Caco-2 (cell line): ENCODE measurements at regions of chr7 and their contacts with region 1.

Region 1: GRCh38 chr7:124152859-124153692 is 120.2 kb upstream of the TMEM229A start:
- DNase-seq: peak in 1 of 2 experiments; percentile 49
- H3K4me3 ChIP-seq: no peak overlapping the region
- H3K4me3 Mint-ChIP-seq: no peak overlapping the region
- H3K27ac Mint-ChIP-seq: no peak overlapping the region
- H3K4me1 ChIP-seq: no peaks in the 10 kb centered on the region
- H3K4me1 Mint-ChIP-seq: no peaks in the 10 kb centered on the region
- H3K27me3 ChIP-seq: no peaks in the 10 kb centered on the region
- H3K27me3 Mint-ChIP-seq: peaks cover 3% of the 10 kb centered on the region
- CTCF ChIP-seq: peak; percentile 46 to 53

Region 2: GRCh38 chr7:123966936-123967335 is 186.1 kb before region 1 on chr7:
- CTCF ChIA-PET with region 1: no interaction called
- POLR2A ChIA-PET with region 1: no interaction called
- intact Hi-C with region 1: loop called (anchors 1 kb)
- DNase-seq: no peak
- H3K4me3 ChIP-seq: no peak overlapping the region
- H3K4me3 Mint-ChIP-seq: no peak overlapping the region
- H3K27ac Mint-ChIP-seq: no peak overlapping the region
- H3K4me1 ChIP-seq: no peaks in the 10 kb centered on the region
- H3K4me1 Mint-ChIP-seq: no peaks in the 10 kb centered on the region
- H3K27me3 ChIP-seq: no peaks in the 10 kb centered on the region
- H3K27me3 Mint-ChIP-seq: no peaks in the 10 kb centered on the region
- CTCF ChIP-seq: peak in 1 of 2 experiments; percentile 12

Region 3: GRCh38 chr7:124101173-124101768 is 51.8 kb before region 1 on chr7:
- CTCF ChIA-PET with region 1: no interaction called
- POLR2A ChIA-PET with region 1: no interaction called
- intact Hi-C with region 1: no loop called
- DNase-seq: no peak
- H3K4me3 ChIP-seq: no peak overlapping the region
- H3K4me3 Mint-ChIP-seq: no peak overlapping the region
- H3K27ac Mint-ChIP-seq: no peak overlapping the region
- H3K4me1 ChIP-seq: no peaks in the 10 kb centered on the region
- H3K4me1 Mint-ChIP-seq: no peaks in the 10 kb centered on the region
- H3K27me3 ChIP-seq: no peaks in the 10 kb centered on the region
- H3K27me3 Mint-ChIP-seq: no peaks in the 10 kb centered on the region
- CTCF ChIP-seq: peak in 1 of 2 experiments; percentile 29

Region 4: DNA sequence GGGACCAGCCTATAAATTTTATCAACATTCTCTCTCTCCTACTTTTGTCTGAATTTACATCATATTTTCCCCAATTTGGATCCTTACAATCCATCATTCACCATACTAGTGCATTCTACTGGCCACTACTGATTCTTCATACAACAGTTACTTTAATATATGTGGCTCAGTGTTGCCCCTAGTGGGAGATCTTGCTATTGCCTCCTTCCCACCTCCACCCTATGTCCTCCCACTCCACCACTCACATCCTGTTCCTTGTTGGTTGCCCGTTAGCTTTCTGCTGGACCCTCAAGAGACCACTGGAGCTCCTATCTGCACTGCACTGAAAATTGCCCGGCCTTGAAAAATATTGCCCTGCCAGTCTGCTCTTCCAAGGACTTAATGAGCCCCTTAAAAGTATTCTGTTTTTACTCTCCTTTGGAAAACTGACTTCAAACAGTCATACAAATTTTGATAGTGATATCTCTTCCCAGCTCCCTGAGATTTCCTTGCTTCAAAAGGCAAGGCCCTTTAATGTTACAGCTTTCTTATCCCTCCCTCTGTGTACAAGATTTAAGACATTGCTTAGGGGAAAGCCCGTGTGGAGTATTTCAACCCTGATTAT is 123.0 kb after region 1 on chr7:
- CTCF ChIA-PET with region 1: no interaction called
- POLR2A ChIA-PET with region 1: no interaction called
- intact Hi-C with region 1: loop called (anchors 5 kb)
- DNase-seq: peak; percentile 36 to 62
- H3K4me3 ChIP-seq: no peak overlapping the region
- H3K4me3 Mint-ChIP-seq: no peak overlapping the region
- H3K27ac Mint-ChIP-seq: no peak overlapping the region
- H3K4me1 ChIP-seq: no peaks in the 10 kb centered on the region
- H3K4me1 Mint-ChIP-seq: no peaks in the 10 kb centered on the region
- H3K27me3 ChIP-seq: no peaks in the 10 kb centered on the region
- H3K27me3 Mint-ChIP-seq: peaks cover 6% of the 10 kb centered on the region
- CTCF ChIP-seq: peak; percentile 56 to 63

Region 5: GRCh38 chr7:124784879-124785818 is 632.1 kb after region 1 on chr7:
- CTCF ChIA-PET with region 1: interaction called, 4 read pairs
- POLR2A ChIA-PET with region 1: no interaction called
- intact Hi-C with region 1: loop called (anchors 1 kb)
- DNase-seq: peak; percentile 50 to 56
- H3K4me3 ChIP-seq: no peak overlapping the region
- H3K4me3 Mint-ChIP-seq: no peak overlapping the region
- H3K27ac Mint-ChIP-seq: no peak overlapping the region
- H3K4me1 ChIP-seq: no peaks in the 10 kb centered on the region
- H3K4me1 Mint-ChIP-seq: no peaks in the 10 kb centered on the region
- H3K27me3 ChIP-seq: no peaks in the 10 kb centered on the region
- H3K27me3 Mint-ChIP-seq: peaks cover 10% of the 10 kb centered on the region
- CTCF ChIP-seq: peak; percentile 74 to 87

Region 6: DNA sequence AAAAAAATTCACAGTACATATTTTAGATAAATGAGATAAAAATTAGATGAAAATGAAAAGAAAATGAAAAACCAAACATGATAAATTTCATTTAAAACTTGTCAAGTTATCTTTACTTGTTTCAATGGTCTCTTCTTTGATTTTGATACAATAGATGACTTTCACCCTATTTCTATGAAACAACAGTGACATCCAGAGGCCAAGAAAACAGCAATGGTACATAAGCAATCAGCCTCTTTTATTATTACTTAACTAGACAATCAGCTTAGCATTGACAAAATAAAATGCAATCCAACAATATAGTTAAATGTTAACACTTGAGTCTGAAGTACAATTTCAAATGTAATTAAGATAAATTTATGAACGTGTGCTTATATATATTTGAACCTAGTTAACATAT is 687.4 kb after region 1 on chr7:
- CTCF ChIA-PET with region 1: no interaction called
- POLR2A ChIA-PET with region 1: no interaction called
- intact Hi-C with region 1: loop called (anchors 5 kb)
- DNase-seq: no peak
- H3K4me3 ChIP-seq: no peak overlapping the region
- H3K4me3 Mint-ChIP-seq: no peak overlapping the region
- H3K27ac Mint-ChIP-seq: no peak overlapping the region
- H3K4me1 ChIP-seq: no peaks in the 10 kb centered on the region
- H3K4me1 Mint-ChIP-seq: no peaks in the 10 kb centered on the region
- H3K27me3 ChIP-seq: no peaks in the 10 kb centered on the region
- H3K27me3 Mint-ChIP-seq: no peaks in the 10 kb centered on the region
- CTCF ChIP-seq: peak in 1 of 2 experiments; percentile 27

Region 7: DNA sequence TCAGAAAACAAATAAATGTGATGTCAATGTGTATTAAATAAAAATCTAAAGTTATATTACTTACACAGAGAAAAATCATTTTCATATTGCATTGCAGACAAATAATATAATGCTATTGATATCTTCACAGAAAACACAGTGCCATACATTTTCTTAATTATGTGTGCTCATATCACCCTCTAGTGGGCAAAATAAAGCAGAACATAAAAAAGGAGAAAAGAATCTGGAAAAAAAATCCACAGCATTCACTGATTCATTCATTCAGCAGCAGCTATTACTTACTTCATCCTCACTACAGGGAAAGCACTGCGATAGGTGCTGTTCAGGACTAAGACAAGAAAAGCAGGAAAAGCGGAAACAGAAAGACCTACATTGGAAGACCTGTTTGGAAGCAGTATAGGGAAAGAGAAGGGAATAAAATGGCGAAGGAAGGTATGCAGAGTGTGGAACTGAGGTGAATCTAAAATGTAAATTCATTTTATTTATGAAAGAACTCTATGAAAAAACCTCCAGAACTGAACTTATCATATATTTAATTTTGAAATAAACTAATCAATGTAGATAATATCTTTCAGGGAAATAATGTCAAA is 703.3 kb after region 1 on chr7:
- CTCF ChIA-PET with region 1: no interaction called
- POLR2A ChIA-PET with region 1: no interaction called
- intact Hi-C with region 1: loop called (anchors 1 kb)
- DNase-seq: peak in 1 of 2 experiments; percentile 21
- H3K4me3 ChIP-seq: no peak overlapping the region
- H3K4me3 Mint-ChIP-seq: no peak overlapping the region
- H3K27ac Mint-ChIP-seq: no peak overlapping the region
- H3K4me1 ChIP-seq: no peaks in the 10 kb centered on the region; the same call in 1 of the 2 replicates
- H3K4me1 Mint-ChIP-seq: no peaks in the 10 kb centered on the region
- H3K27me3 ChIP-seq: no peaks in the 10 kb centered on the region
- H3K27me3 Mint-ChIP-seq: no peaks in the 10 kb centered on the region
- CTCF ChIP-seq: peak; percentile 50 to 56